MCF 10A (cell line): ENCODE measurements at regions of chr2 and their contacts with region 1.

Region 1: GRCh38 chr2:182650704-182651103 is 65.4 kb upstream of the DNAJC10 start:
- DNase-seq: peak; percentile 66
- H3K4me3 Mint-ChIP-seq: no peak overlapping the region
- H3K27ac Mint-ChIP-seq: no peak overlapping the region
- H3K4me1 Mint-ChIP-seq: peaks cover 5% of the 10 kb centered on the region
- H3K27me3 Mint-ChIP-seq: no peaks in the 10 kb centered on the region
- CTCF ChIP-seq: peak; percentile 43

Region 2: GRCh38 chr2:181742922-181743722 is 907.6 kb before region 1 on chr2:
- CTCF ChIA-PET with region 1: interaction called, 5 read pairs
- POLR2A ChIA-PET with region 1: no interaction called
- intact Hi-C with region 1: loop called (anchors 5 kb)
- DNase-seq: peak; percentile 69
- H3K4me3 Mint-ChIP-seq: no peak overlapping the region
- H3K27ac Mint-ChIP-seq: no peak overlapping the region
- H3K4me1 Mint-ChIP-seq: peaks cover 6% of the 10 kb centered on the region
- H3K27me3 Mint-ChIP-seq: no peaks in the 10 kb centered on the region
- CTCF ChIP-seq: peak; percentile 53

Region 3: DNA sequence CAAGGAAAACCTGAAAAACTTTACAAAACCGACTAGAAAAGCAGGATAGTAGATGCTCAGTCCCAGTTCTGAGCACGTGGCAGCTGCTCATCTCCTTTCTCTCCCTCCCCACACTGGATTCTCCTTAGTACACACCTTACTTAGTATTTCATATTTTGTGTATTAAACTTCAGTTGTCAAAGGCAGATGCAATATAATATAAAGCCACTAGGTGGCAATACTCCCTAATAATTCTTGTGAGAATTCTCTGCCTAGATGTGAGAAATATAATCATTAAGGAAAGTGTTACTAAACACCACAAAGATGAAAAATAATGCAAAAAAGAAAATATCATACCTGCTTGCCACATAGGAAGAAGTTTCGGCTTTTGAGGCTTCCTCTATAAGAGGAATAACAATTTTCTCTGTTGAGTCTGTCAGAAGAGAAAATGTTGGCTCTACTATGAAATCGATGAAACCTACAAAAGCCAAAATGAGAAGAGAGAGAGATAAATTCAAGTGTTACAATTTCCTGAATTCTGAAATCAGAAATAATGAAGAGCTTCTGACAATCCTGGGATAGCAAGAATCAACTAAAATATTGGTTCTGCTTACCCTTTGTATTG is 464.5 kb before region 1 on chr2:
- CTCF ChIA-PET with region 1: interaction called, 138 read pairs
- POLR2A ChIA-PET with region 1: interaction called, 4 read pairs
- intact Hi-C with region 1: loop called (anchors 1 kb)
- DNase-seq: peak; percentile 66
- H3K4me3 Mint-ChIP-seq: no peak overlapping the region
- H3K27ac Mint-ChIP-seq: no peak overlapping the region
- H3K4me1 Mint-ChIP-seq: no peaks in the 10 kb centered on the region
- H3K27me3 Mint-ChIP-seq: no peaks in the 10 kb centered on the region
- CTCF ChIP-seq: peak; percentile 58

Region 4: DNA sequence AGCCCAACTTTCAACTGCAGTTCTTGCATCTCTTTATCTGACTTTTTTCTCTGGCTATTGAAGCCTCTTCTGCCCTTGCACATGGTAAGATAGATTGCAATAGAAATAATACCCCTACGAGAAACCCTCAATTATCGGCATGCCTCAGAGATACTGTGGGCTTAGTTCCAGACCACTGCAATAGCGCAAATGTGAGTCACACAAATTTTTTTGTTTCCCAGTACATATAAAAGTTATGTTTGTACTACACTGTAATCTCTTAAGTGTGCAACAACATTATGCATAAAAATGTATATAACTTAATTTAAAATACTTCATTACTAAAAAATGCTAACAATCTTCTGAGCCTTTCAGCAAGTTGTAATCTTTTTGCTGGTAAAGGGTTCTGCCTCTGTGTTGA is 348.5 kb before region 1 on chr2:
- CTCF ChIA-PET with region 1: interaction called, 13 read pairs
- POLR2A ChIA-PET with region 1: no interaction called
- intact Hi-C with region 1: loop called (anchors 1 kb)
- DNase-seq: peak; percentile 71
- H3K4me3 Mint-ChIP-seq: no peak overlapping the region
- H3K27ac Mint-ChIP-seq: no peak overlapping the region
- H3K4me1 Mint-ChIP-seq: peaks cover 31% of the 10 kb centered on the region
- H3K27me3 Mint-ChIP-seq: no peaks in the 10 kb centered on the region
- CTCF ChIP-seq: no peak

Region 5: GRCh38 chr2:182559623-182560022 is 91.1 kb before region 1 on chr2:
- CTCF ChIA-PET with region 1: no interaction called
- POLR2A ChIA-PET with region 1: no interaction called
- intact Hi-C with region 1: no loop called
- DNase-seq: peak; percentile 7
- H3K4me3 Mint-ChIP-seq: no peak overlapping the region
- H3K27ac Mint-ChIP-seq: no peak overlapping the region
- H3K4me1 Mint-ChIP-seq: no peaks in the 10 kb centered on the region
- H3K27me3 Mint-ChIP-seq: no peaks in the 10 kb centered on the region
- CTCF ChIP-seq: no peak

Region 6: GRCh38 chr2:182666674-182667314 is 16.1 kb after region 1 on chr2:
- CTCF ChIA-PET with region 1: interaction called, 16 read pairs
- POLR2A ChIA-PET with region 1: no interaction called
- intact Hi-C with region 1: no loop called
- DNase-seq: peak; percentile 43
- H3K4me3 Mint-ChIP-seq: no peak overlapping the region
- H3K27ac Mint-ChIP-seq: no peak overlapping the region
- H3K4me1 Mint-ChIP-seq: no peaks in the 10 kb centered on the region
- H3K27me3 Mint-ChIP-seq: no peaks in the 10 kb centered on the region
- CTCF ChIP-seq: peak; percentile 51

Region 7: GRCh38 chr2:182784777-182785176 is 134.1 kb after region 1 on chr2:
- CTCF ChIA-PET with region 1: no interaction called
- POLR2A ChIA-PET with region 1: no interaction called
- intact Hi-C with region 1: no loop called
- DNase-seq: peak; percentile 34
- H3K4me3 Mint-ChIP-seq: no peak overlapping the region
- H3K27ac Mint-ChIP-seq: no peak overlapping the region
- H3K4me1 Mint-ChIP-seq: no peaks in the 10 kb centered on the region
- H3K27me3 Mint-ChIP-seq: no peaks in the 10 kb centered on the region
- CTCF ChIP-seq: peak; percentile 49